ENCODE measurements at regions of chr15 and their contacts with region 1.

Region 1: GRCh38 chr15:68304589-68305337 is 27.2 kb downstream of the FEM1B start:
- DNase-seq: no peak
- H3K4me3 Mint-ChIP-seq: no peak overlapping the region
- H3K27ac Mint-ChIP-seq: no peak overlapping the region
- H3K4me1 Mint-ChIP-seq: peaks cover 19% of the 10 kb centered on the region
- H3K27me3 Mint-ChIP-seq: peaks cover 43% of the 10 kb centered on the region

Region 2: GRCh38 chr15:68031404-68031803 is 273.4 kb before region 1 on chr15:
- CTCF ChIA-PET with region 1: no interaction called
- DNase-seq: no peak
- H3K4me3 Mint-ChIP-seq: no peak overlapping the region
- H3K27ac Mint-ChIP-seq: no peak overlapping the region
- H3K4me1 Mint-ChIP-seq: no peaks in the 10 kb centered on the region
- H3K27me3 Mint-ChIP-seq: peaks cover 36% of the 10 kb centered on the region

Region 3: GRCh38 chr15:68199340-68199739 is 105.4 kb before region 1 on chr15:
- CTCF ChIA-PET with region 1: no interaction called
- DNase-seq: no peak
- H3K4me3 Mint-ChIP-seq: no peak overlapping the region
- H3K27ac Mint-ChIP-seq: no peak overlapping the region
- H3K4me1 Mint-ChIP-seq: peaks cover 4% of the 10 kb centered on the region
- H3K27me3 Mint-ChIP-seq: no peaks in the 10 kb centered on the region

Region 4: DNA sequence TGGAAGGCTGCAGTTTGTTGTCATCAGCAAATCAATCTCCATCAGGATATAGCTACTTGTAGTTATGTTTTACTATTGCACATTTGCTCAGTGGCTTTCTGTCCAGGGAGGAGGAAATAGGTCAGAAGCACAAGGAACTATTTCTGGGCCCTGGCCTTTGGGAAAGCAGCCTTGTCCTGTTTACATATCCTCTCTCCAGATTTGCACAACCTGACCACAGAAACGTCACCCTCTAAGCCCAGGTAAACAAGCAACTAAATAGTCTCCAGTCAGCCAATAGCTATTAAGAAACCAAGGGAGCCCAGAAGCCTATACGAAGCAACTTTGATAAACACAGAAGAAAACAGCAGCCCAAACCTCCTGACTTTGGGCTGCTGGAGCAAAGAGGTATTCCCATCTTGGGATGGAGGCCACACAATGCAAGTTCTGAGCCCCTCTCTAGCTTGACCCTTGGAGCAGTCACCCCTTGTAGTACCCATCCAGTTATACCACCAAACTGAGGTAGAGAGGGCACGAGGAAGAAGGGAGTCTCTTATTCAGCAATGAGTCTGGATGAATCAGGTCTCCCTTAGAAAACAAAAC is 29.5 kb before region 1 on chr15:
- CTCF ChIA-PET with region 1: interaction called, 16 read pairs
- DNase-seq: no peak
- H3K4me3 Mint-ChIP-seq: peak overlapping the region; percentile 17
- H3K27ac Mint-ChIP-seq: no peak overlapping the region
- H3K4me1 Mint-ChIP-seq: peaks cover 31% of the 10 kb centered on the region
- H3K27me3 Mint-ChIP-seq: peaks cover 14% of the 10 kb centered on the region

Region 5: GRCh38 chr15:68316061-68316804 is 11.5 kb after region 1 on chr15:
- CTCF ChIA-PET with region 1: interaction called, 19 read pairs
- DNase-seq: peak; percentile 18
- H3K4me3 Mint-ChIP-seq: no peak overlapping the region
- H3K27ac Mint-ChIP-seq: no peak overlapping the region
- H3K4me1 Mint-ChIP-seq: no peaks in the 10 kb centered on the region
- H3K27me3 Mint-ChIP-seq: peaks cover 39% of the 10 kb centered on the region

Region 6: DNA sequence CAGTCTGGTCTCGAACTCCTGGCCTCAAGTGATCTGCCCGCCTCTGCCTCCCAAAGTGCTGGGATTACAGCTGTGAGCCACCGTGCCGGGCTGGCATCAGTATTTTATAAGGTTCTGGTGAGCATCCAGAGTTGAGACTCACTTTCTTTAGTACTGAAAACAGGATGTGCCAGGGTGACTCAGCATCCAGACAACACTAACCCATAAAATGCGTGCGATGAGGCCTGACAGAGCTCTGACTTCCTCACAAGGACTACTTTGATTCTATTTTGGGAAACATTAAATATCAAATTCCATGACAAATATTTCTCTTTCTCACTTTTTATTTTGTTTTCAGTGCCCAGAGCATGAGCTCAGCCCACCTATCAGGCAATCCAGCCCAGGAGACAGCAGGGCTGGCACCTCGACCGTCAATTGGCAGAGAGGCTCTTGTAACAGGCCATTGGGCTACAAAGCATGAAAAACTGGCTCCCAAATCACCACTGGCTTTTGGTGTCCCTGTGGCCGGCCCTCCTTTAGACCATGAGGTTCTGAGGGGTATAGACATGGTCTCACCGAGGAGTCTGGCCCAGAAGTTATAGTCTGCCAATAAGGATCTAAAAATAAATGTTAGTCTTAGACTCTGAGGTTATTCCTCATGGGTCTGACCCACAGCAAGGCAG is 47.8 kb after region 1 on chr15:
- CTCF ChIA-PET with region 1: interaction called, 15 read pairs
- DNase-seq: peak; percentile 68
- H3K4me3 Mint-ChIP-seq: no peak overlapping the region
- H3K27ac Mint-ChIP-seq: peak overlapping the region; percentile 84
- H3K4me1 Mint-ChIP-seq: peaks cover 18% of the 10 kb centered on the region
- H3K27me3 Mint-ChIP-seq: peaks cover 22% of the 10 kb centered on the region

Region 7: GRCh38 chr15:68383161-68384074 is 78.7 kb after region 1 on chr15:
- CTCF ChIA-PET with region 1: interaction called, 122 read pairs
- DNase-seq: peak; percentile 58
- H3K4me3 Mint-ChIP-seq: no peak overlapping the region
- H3K27ac Mint-ChIP-seq: no peak overlapping the region
- H3K4me1 Mint-ChIP-seq: peaks cover 22% of the 10 kb centered on the region
- H3K27me3 Mint-ChIP-seq: peaks cover 12% of the 10 kb centered on the region

Region 8: GRCh38 chr15:68550481-68551295 is 245.9 kb after region 1 on chr15:
- CTCF ChIA-PET with region 1: interaction called, 33 read pairs
- DNase-seq: peak; percentile 86
- H3K4me3 Mint-ChIP-seq: no peak overlapping the region
- H3K27ac Mint-ChIP-seq: peak overlapping the region; percentile 16
- H3K4me1 Mint-ChIP-seq: no peaks in the 10 kb centered on the region
- H3K27me3 Mint-ChIP-seq: peaks cover 31% of the 10 kb centered on the region